PC-3 (cell line): ENCODE measurements at regions of chr11 and their contacts with region 1.

Region 1: GRCh38 chr11:75603791-75604736 is 42.0 kb downstream of the SERPINH1 start:
- DNase-seq: peak; percentile 98
- ATAC-seq: peak; percentile 86
- H3K4me3 ChIP-seq: peak overlapping the region; percentile 67
- H3K27ac ChIP-seq: peak overlapping the region; percentile 95
- H3K4me1 ChIP-seq: peaks cover 32% of the 10 kb centered on the region
- H3K27me3 ChIP-seq: no peaks in the 10 kb centered on the region
- CTCF ChIP-seq: no peak

Region 2: GRCh38 chr11:75652936-75653335 is 48.9 kb after region 1 on chr11:
- CTCF ChIA-PET with region 1: no interaction called
- POLR2A ChIA-PET with region 1: no interaction called
- intact Hi-C with region 1: loop called (anchors 1 kb)
- DNase-seq: peak; percentile 49
- ATAC-seq: peak; percentile 8
- H3K4me3 ChIP-seq: 0 out of 2 replicates have a peak overlapping the region, but pooled peaks have one; percentile 2
- H3K27ac ChIP-seq: peak overlapping the region; percentile 86
- H3K4me1 ChIP-seq: peaks cover 39% of the 10 kb centered on the region
- H3K27me3 ChIP-seq: no peaks in the 10 kb centered on the region
- CTCF ChIP-seq: no peak

Region 3: GRCh38 chr11:75673977-75674582 is 70.0 kb after region 1 on chr11:
- CTCF ChIA-PET with region 1: no interaction called
- POLR2A ChIA-PET with region 1: no interaction called
- intact Hi-C with region 1: no loop called
- DNase-seq: peak; percentile 40
- ATAC-seq: no peak
- H3K4me3 ChIP-seq: no peak overlapping the region
- H3K27ac ChIP-seq: no peak overlapping the region
- H3K4me1 ChIP-seq: no peaks in the 10 kb centered on the region
- H3K27me3 ChIP-seq: peaks cover 29% of the 10 kb centered on the region
- CTCF ChIP-seq: no peak

Region 4: GRCh38 chr11:75706260-75706729 is 102.2 kb after region 1 on chr11:
- CTCF ChIA-PET with region 1: interaction called, 4 read pairs
- POLR2A ChIA-PET with region 1: no interaction called
- intact Hi-C with region 1: loop called (anchors 5 kb)
- DNase-seq: peak; percentile 81
- ATAC-seq: peak; percentile 99
- H3K4me3 ChIP-seq: no peak overlapping the region
- H3K27ac ChIP-seq: no peak overlapping the region
- H3K4me1 ChIP-seq: no peaks in the 10 kb centered on the region
- H3K27me3 ChIP-seq: no peaks in the 10 kb centered on the region
- CTCF ChIP-seq: peak; percentile 93

Region 5: GRCh38 chr11:75836417-75836816 is 232.4 kb after region 1 on chr11:
- CTCF ChIA-PET with region 1: no interaction called
- POLR2A ChIA-PET with region 1: no interaction called
- intact Hi-C with region 1: no loop called
- DNase-seq: no peak
- ATAC-seq: no peak
- H3K4me3 ChIP-seq: no peak overlapping the region
- H3K27ac ChIP-seq: no peak overlapping the region
- H3K4me1 ChIP-seq: peaks cover 15% of the 10 kb centered on the region
- H3K27me3 ChIP-seq: no peaks in the 10 kb centered on the region
- CTCF ChIP-seq: no peak